ENCODE measurements at regions of chr1 and their contacts with region 1.

Region 1: DNA sequence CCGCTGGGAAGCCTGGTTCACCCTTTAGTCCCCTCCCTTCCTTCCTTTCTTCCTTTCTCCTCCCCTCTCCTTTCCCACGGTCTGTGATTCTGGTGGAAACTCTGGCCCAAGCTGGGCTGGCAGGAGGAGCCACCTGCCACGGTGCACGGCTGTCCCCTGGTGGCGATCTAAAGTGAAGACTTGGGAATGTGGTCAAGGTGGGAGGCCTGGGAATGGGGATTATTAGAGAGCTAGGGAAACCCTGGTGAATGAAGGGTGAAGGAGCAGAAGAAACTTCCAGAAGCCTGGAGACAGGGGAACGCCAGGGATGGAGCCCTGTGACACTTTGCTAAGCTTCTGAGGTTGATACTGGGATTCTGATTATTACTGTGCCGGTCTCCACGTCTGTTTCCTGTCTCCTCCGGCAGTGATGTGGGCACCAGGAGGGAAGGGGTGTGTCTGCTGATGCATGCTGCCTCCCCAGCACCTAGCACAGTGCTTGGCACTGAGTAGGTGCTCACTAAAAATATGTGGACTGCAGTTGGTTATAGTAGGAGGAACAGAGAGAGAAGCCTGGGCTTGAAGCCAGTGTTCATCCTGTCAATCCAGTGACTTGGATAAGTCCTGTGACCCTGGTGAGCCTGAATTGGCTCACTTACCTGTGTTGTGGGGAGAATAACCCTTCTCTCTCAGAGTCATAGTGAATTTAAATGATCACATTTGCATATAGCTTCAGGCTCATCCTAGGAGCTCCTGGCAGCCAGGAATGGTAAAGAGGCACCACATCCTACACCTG is 71.2 kb upstream of the NBPF3 start:
- DNase-seq: peak; percentile 80
- H3K4me3 Mint-ChIP-seq: no peak overlapping the region
- H3K27ac Mint-ChIP-seq: peak overlapping the region; percentile 73
- H3K4me1 Mint-ChIP-seq: peaks cover 9% of the 10 kb centered on the region
- H3K27me3 Mint-ChIP-seq: no peaks in the 10 kb centered on the region
- CTCF ChIP-seq: peak; percentile 78

Region 2: DNA sequence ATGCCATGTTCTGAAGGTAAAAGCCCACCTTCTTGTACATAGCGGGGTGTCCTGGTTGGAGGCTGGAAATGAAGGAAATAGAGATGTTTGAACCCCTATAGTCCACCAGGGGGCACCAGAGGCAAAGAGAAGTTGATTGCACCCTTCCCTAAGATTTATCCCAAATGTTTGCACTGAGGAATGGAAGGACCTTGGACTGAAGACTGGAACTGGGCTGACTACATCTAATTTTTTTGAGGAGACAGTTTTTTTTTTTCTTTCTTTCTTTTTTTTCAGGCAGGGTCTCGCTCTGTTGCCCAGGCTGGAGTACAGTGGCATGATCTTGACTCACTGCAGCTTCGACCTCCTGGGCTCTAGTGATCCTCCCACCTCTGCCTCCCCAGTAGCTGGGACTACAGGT is 136.7 kb before region 1 on chr1:
- CTCF ChIA-PET with region 1: interaction called, 11 read pairs
- intact Hi-C with region 1: loop called (anchors 1 kb)
- DNase-seq: peak; percentile 38
- H3K4me3 Mint-ChIP-seq: no peak overlapping the region
- H3K27ac Mint-ChIP-seq: no peak overlapping the region
- H3K4me1 Mint-ChIP-seq: no peaks in the 10 kb centered on the region
- H3K27me3 Mint-ChIP-seq: no peaks in the 10 kb centered on the region
- CTCF ChIP-seq: peak; percentile 43

Region 3: GRCh38 chr1:21255278-21255942 is 113.3 kb before region 1 on chr1:
- CTCF ChIA-PET with region 1: interaction called, 49 read pairs
- intact Hi-C with region 1: loop called (anchors 1 kb)
- DNase-seq: peak; percentile 85
- H3K4me3 Mint-ChIP-seq: no peak overlapping the region
- H3K27ac Mint-ChIP-seq: no peak overlapping the region
- H3K4me1 Mint-ChIP-seq: peaks cover 8% of the 10 kb centered on the region
- H3K27me3 Mint-ChIP-seq: no peaks in the 10 kb centered on the region
- CTCF ChIP-seq: peak; percentile 68

Region 4: GRCh38 chr1:21490774-21491553 is 122.3 kb after region 1 on chr1:
- CTCF ChIA-PET with region 1: interaction called, 14 read pairs
- intact Hi-C with region 1: loop called (anchors 5 kb)
- DNase-seq: peak; percentile 34
- H3K4me3 Mint-ChIP-seq: no peak overlapping the region
- H3K27ac Mint-ChIP-seq: no peak overlapping the region
- H3K4me1 Mint-ChIP-seq: no peaks in the 10 kb centered on the region
- H3K27me3 Mint-ChIP-seq: peaks cover 11% of the 10 kb centered on the region
- CTCF ChIP-seq: peak; percentile 36

Region 5: DNA sequence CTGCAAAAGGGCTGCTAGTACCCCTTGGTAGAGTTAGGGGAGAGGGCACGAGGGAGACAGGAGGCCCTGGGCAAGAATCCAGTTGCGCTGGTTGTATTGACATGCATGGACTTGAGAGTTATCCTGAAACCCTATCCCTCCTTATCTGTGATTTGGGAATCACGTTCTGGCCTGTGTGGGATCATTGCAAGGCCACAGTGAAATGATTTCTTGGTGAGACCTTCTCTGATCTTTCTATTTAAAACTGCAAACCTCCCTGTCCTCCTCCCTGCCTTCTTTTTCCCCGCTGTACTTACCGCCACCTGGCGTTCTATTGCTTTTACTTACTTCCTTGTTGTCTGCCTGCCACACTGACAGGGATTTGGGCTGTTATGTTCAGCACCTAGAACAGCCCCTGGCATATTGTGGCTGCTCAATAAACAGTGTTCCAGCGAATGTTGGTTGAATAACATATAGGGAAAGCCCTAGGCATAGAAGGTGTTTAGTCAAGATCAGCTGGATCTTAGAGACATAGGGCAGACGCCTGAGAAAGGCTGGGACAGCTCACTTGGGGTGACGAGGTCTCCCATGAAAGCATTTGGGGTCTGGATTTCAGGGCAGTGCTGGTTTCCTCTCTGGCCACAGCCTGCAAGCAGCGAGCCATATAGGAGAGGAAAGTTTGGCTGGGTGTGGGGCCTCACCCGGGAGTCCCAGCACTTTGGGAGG is 166.1 kb after region 1 on chr1:
- CTCF ChIA-PET with region 1: interaction called, 10 read pairs
- intact Hi-C with region 1: loop called (anchors 1 kb)
- DNase-seq: peak; percentile 51
- H3K4me3 Mint-ChIP-seq: no peak overlapping the region
- H3K27ac Mint-ChIP-seq: no peak overlapping the region
- H3K4me1 Mint-ChIP-seq: no peaks in the 10 kb centered on the region
- H3K27me3 Mint-ChIP-seq: peaks cover 57% of the 10 kb centered on the region
- CTCF ChIP-seq: no peak

Region 6: GRCh38 chr1:21573971-21574465 is 205.3 kb after region 1 on chr1:
- CTCF ChIA-PET with region 1: interaction called, 6 read pairs
- intact Hi-C with region 1: loop called (anchors 1 kb)
- DNase-seq: peak; percentile 66
- H3K4me3 Mint-ChIP-seq: no peak overlapping the region
- H3K27ac Mint-ChIP-seq: no peak overlapping the region
- H3K4me1 Mint-ChIP-seq: no peaks in the 10 kb centered on the region
- H3K27me3 Mint-ChIP-seq: no peaks in the 10 kb centered on the region
- CTCF ChIP-seq: peak; percentile 31

Region 7: GRCh38 chr1:21659099-21659923 is 290.6 kb after region 1 on chr1:
- CTCF ChIA-PET with region 1: interaction called, 11 read pairs
- intact Hi-C with region 1: loop called (anchors 5 kb)
- DNase-seq: peak; percentile 80
- H3K4me3 Mint-ChIP-seq: peak overlapping the region; percentile 56
- H3K27ac Mint-ChIP-seq: no peak overlapping the region
- H3K4me1 Mint-ChIP-seq: peaks cover 7% of the 10 kb centered on the region
- H3K27me3 Mint-ChIP-seq: peaks cover 19% of the 10 kb centered on the region
- CTCF ChIP-seq: peak; percentile 86

Measured in Calu3 (cell line).